ENCODE measurements at regions of chr17 and their contacts with region 1.

Region 1: DNA sequence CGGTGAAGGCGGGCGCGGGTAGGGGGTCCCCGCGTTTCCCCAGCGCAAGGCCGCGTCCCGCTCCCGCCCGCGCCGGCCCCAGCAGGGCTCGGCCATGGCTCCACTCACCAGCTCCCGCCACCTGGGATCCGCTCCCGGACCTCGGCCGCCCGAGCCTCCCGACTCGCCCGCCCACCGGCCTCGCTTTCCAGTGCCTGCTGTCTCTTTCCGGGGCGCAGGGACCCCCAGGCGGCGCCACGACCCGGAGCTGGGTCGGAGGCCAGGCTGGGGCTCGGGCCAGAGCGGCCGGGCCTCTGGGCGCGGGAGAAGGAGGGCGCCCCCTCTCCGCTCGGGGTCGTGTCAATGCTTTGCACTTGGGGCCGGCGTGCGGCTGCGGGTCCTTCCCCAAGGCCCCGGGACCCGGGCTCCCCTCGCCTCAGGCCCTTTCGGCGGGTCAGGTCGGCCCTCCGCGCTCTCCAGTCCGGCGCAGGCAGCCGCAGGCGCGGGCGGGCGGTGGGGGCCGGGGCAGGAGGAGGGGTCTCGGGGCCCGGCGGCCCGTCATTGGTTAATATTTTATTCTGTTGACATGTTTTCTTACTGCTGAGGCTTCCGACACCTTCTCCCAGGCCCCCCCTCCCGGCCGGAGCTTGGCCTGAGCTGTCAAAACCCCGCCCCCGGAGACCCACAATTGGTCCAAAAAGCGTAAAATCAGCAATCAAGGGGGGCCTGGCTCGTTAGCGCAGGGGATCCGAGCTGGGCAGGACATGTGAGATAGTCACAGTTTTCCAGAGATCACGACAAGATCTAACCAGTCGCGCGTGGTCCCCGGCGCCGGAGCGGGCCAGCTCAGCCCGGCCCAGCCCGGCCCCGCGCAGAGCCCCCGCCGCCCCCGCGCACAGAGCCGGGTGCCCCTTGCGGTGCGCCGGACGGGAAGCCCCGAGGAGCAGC is at the start of gene TBX2:
- DNase-seq: no peak
- H3K4me3 ChIP-seq: peak within 1 kb of the TSS; percentile 78
- H3K27me3 ChIP-seq: no peaks in the 10 kb centered on the region
- CTCF ChIP-seq: peak; percentile 1; the same call in 1 of the 2 replicates
- polyA plus RNA-seq, gene TBX2: 4.3 and 7.8 TPM in 2 replicates

Region 2: DNA sequence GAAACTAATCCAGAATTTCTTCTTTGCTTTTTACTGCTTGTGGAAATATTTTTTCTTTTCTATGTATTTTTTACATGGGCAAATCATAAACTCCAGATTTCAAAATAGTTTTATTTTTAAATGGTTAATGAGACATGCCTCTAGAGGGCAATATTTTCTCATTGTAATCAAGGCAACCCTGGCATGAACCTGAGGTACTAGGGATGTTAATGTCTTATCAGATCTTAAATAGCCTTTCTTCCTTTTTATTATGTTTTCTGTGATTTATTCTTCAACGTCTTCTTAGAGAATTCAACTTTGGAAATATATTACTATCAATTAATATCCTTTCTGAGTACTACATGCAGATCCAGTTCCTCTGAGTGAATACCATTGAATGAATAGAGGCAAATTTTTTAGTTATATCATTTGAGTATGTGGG is 397.1 kb before region 1 on chr17:
- CTCF ChIA-PET with region 1: interaction called, 10 read pairs
- POLR2A ChIA-PET with region 1: no interaction called
- DNase-seq: no peak
- H3K4me3 ChIP-seq: no peak overlapping the region
- H3K27me3 ChIP-seq: no peaks in the 10 kb centered on the region
- CTCF ChIP-seq: peak; percentile 48

Region 3: GRCh38 chr17:61454381-61455323 is 55.3 kb after region 1 on chr17:
- CTCF ChIA-PET with region 1: no interaction called
- POLR2A ChIA-PET with region 1: no interaction called
- DNase-seq: no peak
- H3K4me3 ChIP-seq: peak overlapping the region; percentile 1; the same call in 1 of the 2 replicates
- H3K27me3 ChIP-seq: peaks cover 55% of the 10 kb centered on the region
- CTCF ChIP-seq: no peak

Measured in BJ (cell line).